IMR-90 (cell line): ENCODE measurements at regions of chr2 and their contacts with region 1.

Region 1: DNA sequence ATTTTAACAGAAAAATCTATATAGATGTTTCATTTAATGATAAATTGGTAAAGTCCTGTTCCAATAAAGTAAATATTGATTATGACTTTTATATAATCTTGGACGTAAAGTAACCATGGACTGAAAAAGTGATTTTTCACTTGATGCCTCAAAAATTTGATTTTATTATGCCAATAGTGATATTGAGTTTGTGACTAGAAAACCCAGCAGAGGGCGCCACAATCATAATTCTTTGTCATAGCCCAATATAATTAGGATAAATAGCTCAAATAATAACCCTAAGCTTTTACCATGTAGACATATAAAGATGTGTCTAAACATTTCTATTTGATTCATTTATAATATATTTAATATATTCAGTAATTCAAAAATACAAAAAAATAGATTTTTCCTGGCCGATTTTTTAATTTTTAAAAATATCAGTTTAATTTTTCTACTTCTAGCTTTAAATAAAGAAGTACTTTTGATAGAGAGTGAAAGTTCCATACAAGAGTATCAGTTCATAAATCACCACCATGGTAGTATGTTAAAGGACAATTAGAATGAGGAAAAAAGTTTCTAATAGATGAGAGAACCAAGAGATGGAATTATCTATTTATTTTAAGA is 30.7 kb downstream of the CAMKMT start:
- DNase-seq: peak; percentile 21
- ATAC-seq: peak; percentile 37; the same call in 1 of the 2 replicates
- H3K4me3 ChIP-seq: no peak overlapping the region
- H3K27ac ChIP-seq: no peak overlapping the region
- H3K4me1 ChIP-seq: no peaks in the 10 kb centered on the region
- H3K27me3 ChIP-seq: no peaks in the 10 kb centered on the region
- CTCF ChIP-seq: peak; percentile 65
- POLR2A ChIP-seq: no peak
- RAD21 ChIP-seq: peak; percentile 55

Region 2: GRCh38 chr2:44715671-44716081 is 323.2 kb after region 1 on chr2:
- CTCF ChIA-PET with region 1: no interaction called
- POLR2A ChIA-PET with region 1: no interaction called
- dilution Hi-C with region 1: no loop called
- in situ Hi-C with region 1: no loop called
- intact Hi-C with region 1: loop called (anchors 1 kb)
- DNase-seq: peak; percentile 27
- ATAC-seq: peak; percentile 67
- H3K4me3 ChIP-seq: no peak overlapping the region
- H3K27ac ChIP-seq: no peak overlapping the region
- H3K4me1 ChIP-seq: no peaks in the 10 kb centered on the region
- H3K27me3 ChIP-seq: no peaks in the 10 kb centered on the region
- CTCF ChIP-seq: peak; percentile 49
- POLR2A ChIP-seq: no peak
- RAD21 ChIP-seq: peak; percentile 51

Region 3: GRCh38 chr2:44955593-44956392 is 563.4 kb after region 1 on chr2:
- CTCF ChIA-PET with region 1: interaction called, 11 read pairs
- POLR2A ChIA-PET with region 1: no interaction called
- dilution Hi-C with region 1: no loop called
- in situ Hi-C with region 1: loop called (anchors 10 kb)
- intact Hi-C with region 1: loop called (anchors 1 kb)
- DNase-seq: peak; percentile 56
- ATAC-seq: peak; percentile 78
- H3K4me3 ChIP-seq: no peak overlapping the region
- H3K27ac ChIP-seq: no peak overlapping the region
- H3K4me1 ChIP-seq: no peaks in the 10 kb centered on the region
- H3K27me3 ChIP-seq: peaks cover 52% of the 10 kb centered on the region
- CTCF ChIP-seq: peak; percentile 94
- POLR2A ChIP-seq: no peak
- RAD21 ChIP-seq: peak; percentile 89